IMR-90 (cell line): ENCODE measurements at regions of chr13 and their contacts with region 1.

Region 1: GRCh38 chr13:57624565-57625435 is 6.7 kb upstream of the PCDH17 start:
- DNase-seq: peak; percentile 41
- ATAC-seq: no peak
- H3K4me3 ChIP-seq: no peak overlapping the region
- H3K27ac ChIP-seq: no peak overlapping the region
- H3K4me1 ChIP-seq: no peaks in the 10 kb centered on the region; the same call in 1 of the 2 replicates
- H3K27me3 ChIP-seq: peaks cover 8% of the 10 kb centered on the region
- CTCF ChIP-seq: peak; percentile 61
- POLR2A ChIP-seq: no peak
- RAD21 ChIP-seq: peak; percentile 36

Region 2: DNA sequence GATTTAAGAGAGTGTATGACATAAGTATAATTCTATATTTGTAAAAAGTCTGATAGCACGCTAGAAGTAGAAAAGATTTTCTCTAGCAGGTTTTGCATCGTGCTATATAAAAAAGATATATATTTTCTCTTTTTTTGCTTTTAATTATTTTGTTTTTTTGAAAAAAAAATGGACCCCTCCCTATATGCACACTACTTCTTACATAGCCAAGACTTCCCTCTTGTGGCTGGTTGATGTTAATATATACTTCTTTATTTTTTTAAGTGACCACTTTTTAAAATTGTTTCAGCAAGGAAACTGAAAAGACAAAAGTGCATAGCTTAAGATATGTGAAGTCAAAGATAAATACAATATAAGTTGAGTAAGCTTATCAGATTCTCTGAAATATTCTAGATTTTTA is 1336.1 kb after region 1 on chr13:
- CTCF ChIA-PET with region 1: no interaction called
- POLR2A ChIA-PET with region 1: no interaction called
- dilution Hi-C with region 1: no loop called
- in situ Hi-C with region 1: no loop called
- intact Hi-C with region 1: loop called (anchors 10 kb)
- DNase-seq: peak; percentile 2
- ATAC-seq: no peak
- H3K4me3 ChIP-seq: no peak overlapping the region
- H3K27ac ChIP-seq: no peak overlapping the region
- H3K4me1 ChIP-seq: no peaks in the 10 kb centered on the region
- H3K27me3 ChIP-seq: no peaks in the 10 kb centered on the region
- CTCF ChIP-seq: peak; percentile 20; the same call in 1 of the 2 replicates
- POLR2A ChIP-seq: no peak
- RAD21 ChIP-seq: no peak

Region 3: DNA sequence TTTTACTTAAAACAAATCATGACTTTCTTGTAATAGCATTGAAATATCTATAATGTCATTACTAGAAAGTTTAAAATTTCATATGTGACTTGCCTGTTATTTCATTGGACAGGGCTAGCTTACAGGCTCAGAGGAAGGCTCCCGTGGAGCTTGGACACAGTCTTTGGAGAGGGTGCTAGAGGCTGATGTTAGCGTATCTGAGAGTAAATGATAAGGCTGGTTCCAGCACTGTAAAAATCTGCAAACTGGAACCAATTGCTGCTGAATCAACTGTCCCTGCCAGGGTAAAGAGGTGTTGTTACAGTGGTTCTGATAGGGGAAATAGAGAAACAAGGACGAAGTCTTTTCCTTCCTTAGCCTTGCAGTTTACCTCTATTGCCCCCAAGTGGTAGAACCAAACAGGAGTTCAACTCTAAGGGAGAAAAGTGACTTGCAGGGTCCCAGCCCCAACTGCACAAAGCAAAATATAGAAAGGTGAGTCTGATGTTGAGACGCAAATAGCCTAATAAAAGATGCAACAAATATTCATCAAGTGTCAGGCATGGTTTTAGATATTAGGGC is 1637.2 kb after region 1 on chr13:
- CTCF ChIA-PET with region 1: no interaction called
- POLR2A ChIA-PET with region 1: no interaction called
- dilution Hi-C with region 1: no loop called
- in situ Hi-C with region 1: no loop called
- intact Hi-C with region 1: loop called (anchors 1 kb)
- DNase-seq: peak; percentile 12
- ATAC-seq: no peak
- H3K4me3 ChIP-seq: no peak overlapping the region
- H3K27ac ChIP-seq: no peak overlapping the region
- H3K4me1 ChIP-seq: no peaks in the 10 kb centered on the region
- H3K27me3 ChIP-seq: no peaks in the 10 kb centered on the region
- CTCF ChIP-seq: peak; percentile 44
- POLR2A ChIP-seq: no peak
- RAD21 ChIP-seq: peak; percentile 38; the same call in 1 of the 2 replicates

Region 4: GRCh38 chr13:59318320-59318930 is 1693.6 kb after region 1 on chr13:
- CTCF ChIA-PET with region 1: interaction called, 4 read pairs
- POLR2A ChIA-PET with region 1: no interaction called
- dilution Hi-C with region 1: no loop called
- in situ Hi-C with region 1: loop called (anchors 25 kb)
- intact Hi-C with region 1: loop called (anchors 1 kb)
- DNase-seq: peak; percentile 46
- ATAC-seq: peak; percentile 77
- H3K4me3 ChIP-seq: no peak overlapping the region
- H3K27ac ChIP-seq: no peak overlapping the region
- H3K4me1 ChIP-seq: no peaks in the 10 kb centered on the region
- H3K27me3 ChIP-seq: no peaks in the 10 kb centered on the region
- CTCF ChIP-seq: peak; percentile 69
- POLR2A ChIP-seq: no peak
- RAD21 ChIP-seq: peak; percentile 67